ENCODE measurements at regions of chr1 and their contacts with region 1.

Region 1: DNA sequence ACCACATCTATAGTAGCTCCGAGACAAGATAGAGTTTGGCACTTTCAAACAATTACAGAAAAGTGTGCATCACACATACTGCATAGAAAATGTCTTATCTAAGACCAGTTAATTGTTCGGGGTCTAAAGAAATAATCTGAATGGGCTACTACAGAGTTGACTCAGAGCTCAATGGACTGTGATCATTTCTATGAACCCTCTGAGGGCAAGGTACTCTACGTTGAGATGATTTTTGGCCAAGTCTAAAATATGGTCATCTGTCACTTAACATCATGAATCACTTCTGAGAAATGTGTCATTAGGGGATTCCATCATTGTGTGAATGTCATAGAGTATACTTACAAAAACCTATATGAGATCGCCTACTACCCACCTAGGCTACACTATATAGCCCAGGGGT is 123.5 kb downstream of the SLC44A5 start:
- DNase-seq: no peak
- ATAC-seq: no peak
- H3K4me3 ChIP-seq: no peak overlapping the region
- H3K4me3 Mint-ChIP-seq: no peak overlapping the region
- H3K27ac ChIP-seq: no peak overlapping the region
- H3K27ac Mint-ChIP-seq: no peak overlapping the region
- H3K4me1 ChIP-seq: no peaks in the 10 kb centered on the region
- H3K4me1 Mint-ChIP-seq: no peaks in the 10 kb centered on the region
- H3K27me3 ChIP-seq: no peaks in the 10 kb centered on the region
- H3K27me3 Mint-ChIP-seq: no peaks in the 10 kb centered on the region

Region 2: DNA sequence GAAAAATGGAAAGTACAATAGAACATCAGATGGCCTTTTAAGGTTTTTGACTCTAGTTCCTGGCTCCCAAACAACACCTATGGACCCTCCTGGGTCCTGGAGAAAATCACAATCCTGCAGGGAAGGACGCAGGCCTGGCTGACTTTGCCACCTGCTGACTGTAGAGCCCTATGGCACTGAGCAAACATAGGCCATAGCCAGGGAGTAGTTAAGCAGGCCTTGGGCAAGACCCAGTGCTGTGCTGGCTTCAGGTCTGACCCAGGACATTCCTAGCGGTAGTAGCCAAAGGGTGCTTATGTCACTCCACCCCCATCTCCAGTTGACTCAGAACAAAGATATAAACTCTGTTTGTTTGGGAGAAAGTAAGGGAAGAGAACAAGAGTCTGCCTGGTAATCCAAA is 25.5 kb before region 1 on chr1:
- CTCF ChIA-PET with region 1: interaction called in 1 of 2 experiments, 13 read pairs
- POLR2A ChIA-PET with region 1: no interaction called
- DNase-seq: no peak
- ATAC-seq: no peak
- H3K4me3 ChIP-seq: no peak overlapping the region
- H3K4me3 Mint-ChIP-seq: no peak overlapping the region
- H3K27ac ChIP-seq: no peak overlapping the region
- H3K27ac Mint-ChIP-seq: no peak overlapping the region
- H3K4me1 ChIP-seq: no peaks in the 10 kb centered on the region
- H3K4me1 Mint-ChIP-seq: no peaks in the 10 kb centered on the region
- H3K27me3 ChIP-seq: no peaks in the 10 kb centered on the region
- H3K27me3 Mint-ChIP-seq: no peaks in the 10 kb centered on the region

Region 3: GRCh38 chr1:75643460-75643859 is 156.1 kb after region 1 on chr1:
- CTCF ChIA-PET with region 1: no interaction called
- POLR2A ChIA-PET with region 1: no interaction called
- DNase-seq: no peak
- ATAC-seq: no peak
- H3K4me3 ChIP-seq: no peak overlapping the region
- H3K4me3 Mint-ChIP-seq: no peak overlapping the region
- H3K27ac ChIP-seq: no peak overlapping the region
- H3K27ac Mint-ChIP-seq: no peak overlapping the region
- H3K4me1 ChIP-seq: no peaks in the 10 kb centered on the region
- H3K4me1 Mint-ChIP-seq: no peaks in the 10 kb centered on the region
- H3K27me3 ChIP-seq: peaks cover 0 to 2% of the 10 kb centered on the region in 2 experiments
- H3K27me3 Mint-ChIP-seq: no peaks in the 10 kb centered on the region

Measured in T-cell (primary cell).